ENCODE measurements at regions of chr6 and their contacts with region 1.

Region 1: GRCh38 chr6:30006170-30007131 is 54.6 kb upstream of the POLR1H start:
- DNase-seq: peak; percentile 60
- H3K4me3 ChIP-seq: peak overlapping the region; percentile 57
- H3K27ac ChIP-seq: no peak overlapping the region
- H3K4me1 ChIP-seq: no peaks in the 10 kb centered on the region
- H3K27me3 ChIP-seq: peaks cover 14% of the 10 kb centered on the region

Region 2: DNA sequence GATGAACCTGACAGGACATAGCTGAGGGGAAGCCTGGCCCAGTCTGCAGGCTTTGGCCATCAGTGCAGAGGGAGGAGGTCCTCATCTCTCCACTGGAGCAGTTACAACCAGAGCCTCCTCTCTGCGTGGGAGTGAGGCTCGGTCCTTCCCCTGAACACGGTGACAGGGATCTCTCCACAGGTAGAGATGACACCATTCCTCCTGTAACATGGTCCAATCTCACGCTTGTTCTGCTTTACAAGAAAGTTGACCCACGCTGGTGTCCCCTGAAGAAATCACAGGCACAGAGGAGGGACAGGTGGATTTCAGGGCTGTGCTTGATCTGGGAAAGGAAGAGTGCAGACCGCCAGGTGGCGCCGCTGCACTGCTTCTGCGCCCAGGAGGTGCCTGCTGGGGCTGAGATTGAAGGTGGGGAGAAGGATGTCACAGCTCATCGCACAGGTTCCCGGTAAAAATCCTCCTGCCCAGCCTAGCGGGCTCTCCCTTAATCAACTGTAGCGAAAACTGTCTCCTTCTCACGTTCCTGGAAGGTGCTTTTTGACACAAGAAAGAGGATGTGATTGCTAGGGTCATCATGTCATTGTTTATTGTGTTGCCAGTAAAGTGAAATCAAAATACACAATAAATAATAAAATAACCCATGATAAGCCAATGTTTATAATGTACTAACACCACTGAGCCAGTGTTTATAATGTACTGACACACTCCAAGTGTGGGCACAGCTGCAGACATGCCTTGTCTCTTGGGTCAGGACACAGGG is 158.4 kb before region 1 on chr6:
- in situ Hi-C with region 1: loop called (anchors 5 kb)
- DNase-seq: peak; percentile 71
- H3K4me3 ChIP-seq: no peak overlapping the region
- H3K27ac ChIP-seq: no peak overlapping the region
- H3K4me1 ChIP-seq: no peaks in the 10 kb centered on the region
- H3K27me3 ChIP-seq: peaks cover 45% of the 10 kb centered on the region

Region 3: GRCh38 chr6:30272017-30272416 is 265.6 kb after region 1 on chr6:
- in situ Hi-C with region 1: no loop called
- DNase-seq: no peak
- H3K4me3 ChIP-seq: no peak overlapping the region
- H3K27ac ChIP-seq: no peak overlapping the region
- H3K4me1 ChIP-seq: no peaks in the 10 kb centered on the region
- H3K27me3 ChIP-seq: no peaks in the 10 kb centered on the region